Endothelial cell of umbilical vein (primary cell): ENCODE measurements at regions of chr9 and their contacts with region 1.

Region 1: DNA sequence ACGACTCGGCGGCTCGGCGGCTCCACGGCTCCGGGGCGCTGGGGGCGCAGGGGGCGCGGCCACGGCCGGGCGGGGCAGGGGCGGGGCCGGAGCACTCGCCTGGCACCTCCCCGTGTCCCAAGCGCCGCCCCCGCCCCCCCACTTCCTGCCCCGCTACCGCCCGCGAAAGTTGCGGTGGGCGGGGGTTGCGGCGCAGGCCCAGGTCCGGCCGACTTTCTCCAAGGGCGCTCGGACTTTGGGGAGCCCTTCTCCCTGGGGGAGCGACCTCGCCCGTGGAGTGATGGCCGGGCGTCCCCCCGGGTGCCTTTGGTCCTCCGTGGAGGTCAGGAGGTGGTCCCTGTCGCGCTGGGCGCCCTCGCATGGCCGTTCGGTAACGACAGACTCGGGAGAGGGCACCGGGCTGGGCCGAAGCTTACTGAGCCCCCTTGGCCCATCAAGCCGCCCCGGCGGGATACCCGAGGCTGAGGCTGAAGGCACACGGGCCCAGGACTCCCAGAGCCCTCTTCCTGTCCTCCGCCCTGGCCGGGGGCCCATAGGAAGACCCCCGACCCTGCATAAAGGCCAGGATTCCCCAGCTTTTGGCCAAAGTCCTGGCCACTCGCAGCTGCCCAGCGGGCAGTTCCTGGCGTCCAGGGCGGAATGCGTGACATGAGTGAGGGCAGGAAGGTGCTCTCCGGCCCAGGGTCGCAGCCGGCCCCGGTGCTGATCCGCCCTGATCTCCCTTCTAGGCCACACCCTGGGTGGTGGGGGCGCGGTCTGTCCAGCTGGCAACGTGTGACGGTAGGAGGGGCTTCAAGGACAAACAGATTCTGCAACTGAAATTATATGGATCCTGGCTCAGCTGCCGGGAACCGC is 883 bp upstream of the VAV2 start:
- DNase-seq: peak; percentile 70
- H3K4me3 ChIP-seq: peak overlapping the region; percentile 51 to 70 (median 67)
- H3K27ac ChIP-seq: peak overlapping the region; percentile 76
- H3K4me1 ChIP-seq: peaks cover 15% of the 10 kb centered on the region
- H3K27me3 ChIP-seq: no peaks in the 10 kb centered on the region
- CTCF ChIP-seq: peak; percentile 25 to 61
- POLR2A ChIP-seq: no peak

Region 2: GRCh38 chr9:133742849-133743444 is 250.1 kb before region 1 on chr9:
- CTCF ChIA-PET with region 1: interaction called, 26 read pairs
- POLR2A ChIA-PET with region 1: no interaction called
- dilution Hi-C with region 1: no loop called
- intact Hi-C with region 1: loop called (anchors 1 kb)
- DNase-seq: peak; percentile 82
- H3K4me3 ChIP-seq: no peak overlapping the region
- H3K27ac ChIP-seq: no peak overlapping the region
- H3K4me1 ChIP-seq: peaks cover 2% of the 10 kb centered on the region
- H3K27me3 ChIP-seq: peaks cover 2 to 12% of the 10 kb centered on the region in 2 experiments
- CTCF ChIP-seq: peak; percentile 98 to 99
- POLR2A ChIP-seq: no peak

Region 3: DNA sequence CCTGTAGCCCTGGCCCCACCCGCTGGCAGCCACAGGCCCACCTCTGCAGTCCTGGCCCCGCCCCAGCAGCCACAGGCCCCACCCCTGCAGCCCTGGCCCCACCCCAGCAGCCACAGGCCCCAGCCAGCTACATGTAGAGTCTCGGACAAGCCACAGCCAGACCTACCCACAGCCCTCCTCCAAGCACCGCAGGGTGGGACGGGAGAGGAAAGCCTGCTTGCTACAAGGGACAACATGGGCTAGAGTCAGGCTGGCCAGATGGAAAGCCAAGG is 205.3 kb before region 1 on chr9:
- CTCF ChIA-PET with region 1: interaction called, 232 read pairs
- POLR2A ChIA-PET with region 1: interaction called, 6 read pairs
- dilution Hi-C with region 1: no loop called
- intact Hi-C with region 1: loop called (anchors 1 kb)
- DNase-seq: no peak
- H3K4me3 ChIP-seq: no peak overlapping the region
- H3K27ac ChIP-seq: no peak overlapping the region
- H3K4me1 ChIP-seq: peaks cover 23% of the 10 kb centered on the region
- H3K27me3 ChIP-seq: no peaks in the 10 kb centered on the region
- CTCF ChIP-seq: no peak
- POLR2A ChIP-seq: no peak

Region 4: GRCh38 chr9:133803028-133803585 is 189.9 kb before region 1 on chr9:
- CTCF ChIA-PET with region 1: interaction called, 13 read pairs
- POLR2A ChIA-PET with region 1: no interaction called
- dilution Hi-C with region 1: no loop called
- intact Hi-C with region 1: no loop called
- DNase-seq: no peak
- H3K4me3 ChIP-seq: no peak overlapping the region
- H3K27ac ChIP-seq: no peak overlapping the region
- H3K4me1 ChIP-seq: no peaks in the 10 kb centered on the region
- H3K27me3 ChIP-seq: no peaks in the 10 kb centered on the region
- CTCF ChIP-seq: no peak
- POLR2A ChIP-seq: no peak

Region 5: GRCh38 chr9:133930682-133931485 is 62.1 kb before region 1 on chr9:
- CTCF ChIA-PET with region 1: interaction called, 9 read pairs
- POLR2A ChIA-PET with region 1: no interaction called
- dilution Hi-C with region 1: no loop called
- intact Hi-C with region 1: loop called (anchors 2 kb)
- DNase-seq: no peak
- H3K4me3 ChIP-seq: no peak overlapping the region
- H3K27ac ChIP-seq: no peak overlapping the region
- H3K4me1 ChIP-seq: peaks cover 24% of the 10 kb centered on the region
- H3K27me3 ChIP-seq: no peaks in the 10 kb centered on the region
- CTCF ChIP-seq: no peak
- POLR2A ChIP-seq: no peak

Region 6: DNA sequence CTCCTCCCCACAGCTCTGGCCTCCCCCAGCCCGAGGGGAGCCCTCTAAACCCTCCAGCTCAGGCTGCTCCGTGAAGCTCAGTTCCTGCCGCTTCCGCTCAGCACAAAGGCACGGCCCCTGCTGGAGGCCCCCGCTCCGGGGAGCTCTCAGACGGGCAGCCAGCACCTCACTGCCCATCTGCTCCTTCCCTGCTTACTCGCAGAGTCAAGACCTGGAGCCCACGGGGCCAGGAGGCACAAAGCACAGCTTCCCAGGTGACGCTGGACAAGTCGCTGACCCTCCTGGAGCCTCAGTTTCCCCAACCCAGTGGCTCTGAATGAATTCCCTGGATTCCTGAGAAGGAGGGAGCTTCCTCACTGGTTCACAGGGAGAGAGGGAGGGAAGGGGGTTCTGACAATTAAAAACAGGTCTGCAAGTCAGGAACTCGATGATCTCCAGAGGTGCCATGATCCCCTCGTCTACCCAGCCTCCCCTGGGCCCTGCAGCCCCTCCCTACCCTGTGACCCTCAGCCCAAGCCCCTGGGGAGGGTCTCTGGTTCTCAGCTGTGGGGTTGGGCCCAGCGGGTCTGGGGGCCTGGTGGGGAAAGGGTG is 37.1 kb before region 1 on chr9:
- CTCF ChIA-PET with region 1: interaction called, 10 read pairs
- POLR2A ChIA-PET with region 1: no interaction called
- dilution Hi-C with region 1: no loop called
- intact Hi-C with region 1: loop called (anchors 2 kb)
- DNase-seq: peak; percentile 56
- H3K4me3 ChIP-seq: peak overlapping the region in 1 of 3 experiments; percentile 1
- H3K27ac ChIP-seq: peak overlapping the region; percentile 69
- H3K4me1 ChIP-seq: peaks cover 35% of the 10 kb centered on the region
- H3K27me3 ChIP-seq: no peaks in the 10 kb centered on the region
- CTCF ChIP-seq: peak in 1 of 2 donors; percentile 26
- POLR2A ChIP-seq: no peak

Region 7: DNA sequence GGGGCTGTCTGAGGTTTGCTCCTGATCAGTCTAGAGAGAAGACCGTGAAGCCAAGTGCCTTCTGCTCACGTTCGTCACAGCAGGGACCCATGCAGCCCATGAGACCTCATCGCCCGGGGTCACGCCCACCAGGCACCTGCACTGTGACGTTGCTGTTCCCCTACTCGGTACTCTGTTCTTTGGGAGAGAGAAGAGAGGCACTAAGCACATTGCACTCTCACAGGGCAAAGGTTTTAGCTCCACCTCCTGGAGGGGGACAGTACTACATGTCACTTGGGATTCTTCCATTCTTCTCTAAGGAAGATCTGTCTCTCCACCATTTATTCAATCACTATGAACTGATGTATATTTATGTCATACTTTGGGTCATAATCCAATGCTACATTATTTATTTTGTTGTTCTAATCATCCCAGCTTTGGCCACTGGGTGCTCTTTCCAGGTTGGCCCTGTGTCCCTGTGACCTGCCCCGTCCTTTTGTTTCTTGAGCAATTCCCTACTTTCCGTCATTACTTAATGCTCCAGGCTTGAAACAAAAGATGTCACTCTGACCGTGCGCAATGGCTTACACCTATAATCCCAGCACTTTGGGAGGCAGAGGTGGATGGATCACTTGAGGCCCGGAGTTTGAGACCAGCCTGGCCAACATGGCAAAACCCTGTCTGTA is 106.2 kb after region 1 on chr9:
- CTCF ChIA-PET with region 1: interaction called, 12 read pairs
- POLR2A ChIA-PET with region 1: no interaction called
- dilution Hi-C with region 1: no loop called
- intact Hi-C with region 1: loop called (anchors 1 kb)
- DNase-seq: peak; percentile 39
- H3K4me3 ChIP-seq: no peak overlapping the region
- H3K27ac ChIP-seq: no peak overlapping the region
- H3K4me1 ChIP-seq: no peaks in the 10 kb centered on the region
- H3K27me3 ChIP-seq: peaks cover 0 to 3% of the 10 kb centered on the region in 2 experiments
- CTCF ChIP-seq: peak; percentile 63 to 75
- POLR2A ChIP-seq: no peak

Region 8: DNA sequence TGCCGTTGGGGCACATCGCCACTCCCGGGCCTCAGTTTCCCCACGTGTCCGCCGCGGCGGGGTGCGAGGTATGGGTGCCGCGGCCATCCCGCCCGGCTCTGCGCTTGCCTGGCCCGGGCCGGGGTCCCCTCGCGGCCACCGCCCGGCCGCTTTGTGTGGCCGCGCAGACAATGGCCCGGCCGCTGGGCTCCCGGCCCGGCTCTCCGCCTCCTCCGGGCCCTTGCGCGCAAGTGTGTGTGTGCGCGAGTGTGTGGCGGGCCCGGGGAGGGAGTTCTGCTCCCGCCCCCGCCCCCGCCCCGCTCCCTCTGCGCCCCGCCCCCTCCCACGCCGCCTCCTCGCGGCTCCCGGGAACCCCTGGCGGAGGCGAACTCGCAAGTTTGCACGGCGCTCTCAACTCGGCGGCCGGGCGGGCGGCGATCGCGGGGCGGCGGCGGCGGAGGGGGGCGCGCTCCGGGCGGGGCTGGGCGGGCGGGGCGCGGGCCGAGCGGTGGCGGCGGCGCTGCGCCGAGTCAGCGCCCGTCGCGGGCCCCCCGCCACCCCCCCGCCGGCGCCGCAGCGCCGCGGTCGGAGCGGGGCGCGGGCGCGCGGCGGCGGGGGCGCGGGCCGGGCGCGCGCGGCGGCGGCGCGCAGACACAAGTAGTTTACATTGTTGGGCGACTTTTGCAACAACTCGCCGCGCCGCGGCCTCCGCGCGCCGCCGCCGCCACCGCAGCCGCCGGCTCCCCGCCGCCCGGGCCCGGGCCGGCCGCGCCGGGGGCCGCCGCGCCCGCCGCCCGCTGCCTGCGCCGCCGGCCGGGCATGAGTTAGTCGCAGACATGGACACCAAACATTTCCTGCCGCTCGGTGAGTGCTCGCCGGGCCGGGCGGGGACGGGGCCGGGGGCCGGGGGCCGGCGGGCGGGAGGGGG is 333.1 kb after region 1 on chr9 and contains the start of gene RXRA:
- CTCF ChIA-PET with region 1: no interaction called
- POLR2A ChIA-PET with region 1: no interaction called
- dilution Hi-C with region 1: no loop called
- intact Hi-C with region 1: no loop called
- DNase-seq: peak; percentile 56
- H3K4me3 ChIP-seq: peak within 1 kb of the TSS; percentile 59 to 84 (median 75)
- H3K27ac ChIP-seq: peak within 1 kb of the TSS; percentile 82
- H3K4me1 ChIP-seq: peaks cover 21% of the 10 kb centered on the region
- H3K27me3 ChIP-seq: no peaks in the 10 kb centered on the region
- CTCF ChIP-seq: no peak
- POLR2A ChIP-seq: peak; percentile 80
- total RNA-seq, gene RXRA: 37.4 and 38.9 TPM in 2 replicates